Activated CD4-positive, alpha-beta memory T cell treated with anti-CD3 and anti-CD28 coated beads for 36 hours (primary cell): ENCODE measurements at regions of chr12 and their contacts with region 1.

Region 1: DNA sequence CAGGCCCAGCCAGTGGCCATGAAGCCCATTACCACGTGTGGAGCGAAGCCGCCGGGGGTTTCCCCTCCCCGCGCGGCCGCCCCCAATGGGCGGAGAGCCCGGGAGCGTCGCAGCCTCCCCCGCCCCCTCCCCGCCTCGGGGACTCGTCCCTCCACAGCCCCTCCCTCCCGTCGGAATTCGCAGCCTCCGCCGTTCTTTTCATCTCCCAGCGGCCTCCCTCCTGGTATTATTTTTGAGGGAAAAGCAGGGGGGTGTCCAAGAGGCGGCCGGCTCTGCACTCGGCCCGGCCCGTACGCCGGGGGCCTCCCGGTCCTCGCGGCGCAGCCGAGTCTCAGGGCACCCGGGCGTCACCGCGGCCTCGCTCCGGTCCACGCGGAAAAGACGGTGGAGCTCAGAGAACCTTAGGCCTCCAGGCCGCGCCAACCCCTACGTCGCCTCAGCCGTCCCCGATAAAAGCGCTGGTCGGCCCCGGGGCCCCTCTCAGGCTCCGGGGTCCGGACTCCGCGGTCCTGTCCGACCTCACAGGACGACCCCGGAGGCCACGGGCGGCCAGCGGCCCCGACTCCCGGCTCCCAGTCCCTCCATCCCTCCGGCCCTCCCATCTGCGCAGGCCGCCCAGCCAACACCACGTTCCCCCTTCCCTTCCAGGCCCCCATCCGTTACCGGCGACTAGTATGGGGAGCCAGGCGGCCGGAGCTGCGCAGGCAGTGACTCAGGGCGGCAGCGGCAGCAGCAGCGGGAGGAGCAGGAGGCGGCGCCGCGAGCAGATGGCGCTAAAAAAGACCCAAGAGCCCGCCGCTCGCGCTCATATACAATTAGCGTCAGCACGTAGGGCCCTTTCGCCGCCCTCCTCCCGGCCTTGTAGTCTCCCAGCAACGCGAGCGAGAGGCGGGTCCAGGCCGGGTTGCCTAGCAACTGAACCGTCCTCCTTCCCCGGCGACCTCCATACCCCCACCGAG is at the start of gene NAP1L1:
- DNase-seq: peak; percentile 98
- H3K4me3 Mint-ChIP-seq: peak within 1 kb of the TSS; percentile 93
- H3K27ac Mint-ChIP-seq: peak within 1 kb of the TSS; percentile 99
- H3K4me1 Mint-ChIP-seq: peaks cover 42% of the 10 kb centered on the region
- H3K27me3 Mint-ChIP-seq: no peaks in the 10 kb centered on the region
- total RNA-seq, gene NAP1L1: 889 to 895 TPM

Region 2: GRCh38 chr12:75511116-75512048 is 572.8 kb before region 1 on chr12 and contains the start of gene KRR1:
- CTCF ChIA-PET with region 1: no interaction called
- POLR2A ChIA-PET with region 1: interaction called, 3 read pairs
- intact Hi-C with region 1: loop called (anchors 1 kb)
- DNase-seq: peak; percentile 95
- H3K4me3 Mint-ChIP-seq: peak within 1 kb of the TSS; percentile 99
- H3K27ac Mint-ChIP-seq: peak within 1 kb of the TSS; percentile 98
- H3K4me1 Mint-ChIP-seq: peaks cover 31% of the 10 kb centered on the region
- H3K27me3 Mint-ChIP-seq: no peaks in the 10 kb centered on the region
- total RNA-seq, gene KRR1: 96.6 to 106 TPM

Region 3: GRCh38 chr12:76057326-76057725 is 26.9 kb before region 1 on chr12:
- CTCF ChIA-PET with region 1: no interaction called
- POLR2A ChIA-PET with region 1: no interaction called
- intact Hi-C with region 1: loop called (anchors 2 kb)
- DNase-seq: no peak
- H3K4me3 Mint-ChIP-seq: no peak overlapping the region
- H3K27ac Mint-ChIP-seq: no peak overlapping the region
- H3K4me1 Mint-ChIP-seq: peaks cover 15% of the 10 kb centered on the region
- H3K27me3 Mint-ChIP-seq: no peaks in the 10 kb centered on the region

Region 4: GRCh38 chr12:76073561-76073960 is 10.6 kb before region 1 on chr12:
- CTCF ChIA-PET with region 1: no interaction called
- POLR2A ChIA-PET with region 1: no interaction called
- intact Hi-C with region 1: no loop called
- DNase-seq: no peak
- H3K4me3 Mint-ChIP-seq: no peak overlapping the region
- H3K27ac Mint-ChIP-seq: no peak overlapping the region
- H3K4me1 Mint-ChIP-seq: peaks cover 74% of the 10 kb centered on the region
- H3K27me3 Mint-ChIP-seq: no peaks in the 10 kb centered on the region

Region 5: GRCh38 chr12:76106631-76107030 is 22.4 kb after region 1 on chr12:
- CTCF ChIA-PET with region 1: no interaction called
- POLR2A ChIA-PET with region 1: no interaction called
- intact Hi-C with region 1: no loop called
- DNase-seq: no peak
- H3K4me3 Mint-ChIP-seq: no peak overlapping the region
- H3K27ac Mint-ChIP-seq: no peak overlapping the region
- H3K4me1 Mint-ChIP-seq: no peaks in the 10 kb centered on the region
- H3K27me3 Mint-ChIP-seq: peaks cover 6% of the 10 kb centered on the region

Region 6: GRCh38 chr12:76274420-76275083 is 190.4 kb after region 1 on chr12:
- CTCF ChIA-PET with region 1: no interaction called
- POLR2A ChIA-PET with region 1: no interaction called
- intact Hi-C with region 1: loop called (anchors 2 kb)
- DNase-seq: peak; percentile 59
- H3K4me3 Mint-ChIP-seq: no peak overlapping the region
- H3K27ac Mint-ChIP-seq: no peak overlapping the region
- H3K4me1 Mint-ChIP-seq: peaks cover 12% of the 10 kb centered on the region
- H3K27me3 Mint-ChIP-seq: peaks cover 14% of the 10 kb centered on the region

Region 7: GRCh38 chr12:76559400-76560085 is 475.4 kb after region 1 on chr12 and contains the start of gene OSBPL8:
- CTCF ChIA-PET with region 1: no interaction called
- POLR2A ChIA-PET with region 1: interaction called, 8 read pairs
- intact Hi-C with region 1: loop called (anchors 1 kb)
- DNase-seq: peak; percentile 98
- H3K4me3 Mint-ChIP-seq: peak within 1 kb of the TSS; percentile 88
- H3K27ac Mint-ChIP-seq: peak within 1 kb of the TSS; percentile 97
- H3K4me1 Mint-ChIP-seq: peaks cover 34% of the 10 kb centered on the region
- H3K27me3 Mint-ChIP-seq: no peaks in the 10 kb centered on the region
- total RNA-seq, gene OSBPL8: 69.8 to 73.7 TPM

Region 8: DNA sequence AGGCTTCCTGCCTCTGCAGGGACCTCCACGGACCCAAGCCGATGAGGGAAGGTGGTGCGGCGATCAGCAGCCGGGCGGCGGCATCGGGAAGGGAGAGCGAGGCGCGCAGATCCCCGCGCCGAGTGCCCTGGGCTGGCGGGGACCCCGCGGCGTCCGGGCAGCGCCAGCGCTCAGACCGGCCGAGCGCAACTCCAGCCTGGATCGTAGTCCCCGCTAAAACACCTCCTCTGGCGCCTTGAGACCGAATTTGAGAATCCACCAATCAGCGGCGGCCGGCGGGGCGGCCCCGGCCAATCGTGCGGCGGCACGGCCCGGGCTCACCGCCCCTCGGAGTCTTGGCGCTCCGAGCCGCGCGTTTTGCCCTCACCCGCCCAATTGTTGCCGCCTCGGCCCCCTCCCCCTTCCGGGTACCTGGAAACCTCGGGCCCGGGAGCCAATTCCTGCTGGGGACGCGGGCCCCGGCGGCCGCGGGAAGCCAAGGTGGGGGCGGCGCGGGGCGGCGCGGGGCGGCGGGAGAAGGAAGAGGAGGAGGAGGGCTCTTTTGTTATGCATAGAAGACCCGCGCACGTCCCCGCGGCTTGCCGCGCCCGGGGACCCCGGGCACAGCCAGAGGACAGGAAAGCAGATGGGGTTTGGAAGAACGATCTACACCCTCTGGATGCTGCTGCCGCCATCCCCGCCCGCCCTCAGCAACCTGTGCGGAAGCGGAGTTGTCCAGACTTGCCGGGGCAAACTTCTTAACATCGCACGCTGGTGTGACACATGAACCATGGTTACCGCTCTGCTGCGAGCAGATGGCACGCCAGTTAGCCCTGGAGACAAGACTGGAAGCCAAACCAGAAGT is 981.4 kb after region 1 on chr12 and contains the start of gene E2F7:
- CTCF ChIA-PET with region 1: no interaction called
- POLR2A ChIA-PET with region 1: no interaction called
- intact Hi-C with region 1: loop called (anchors 10 kb)
- DNase-seq: peak; percentile 91
- H3K4me3 Mint-ChIP-seq: peak within 1 kb of the TSS; percentile 77
- H3K27ac Mint-ChIP-seq: no peak within 1 kb of the TSS
- H3K4me1 Mint-ChIP-seq: peaks cover 8% of the 10 kb centered on the region
- H3K27me3 Mint-ChIP-seq: peaks cover 19% of the 10 kb centered on the region
- total RNA-seq, gene E2F7: 5.8 to 6.0 TPM